ENCODE measurements at regions of chr20 and their contacts with region 1.

Region 1: GRCh38 chr20:23050847-23051631 is 1.6 kb upstream of the THBD start:
- DNase-seq: peak; percentile 94
- H3K4me3 ChIP-seq: peak overlapping the region; percentile 15 to 62 (median 50)
- H3K27ac ChIP-seq: peak overlapping the region; percentile 62
- H3K4me1 ChIP-seq: peaks cover 16% of the 10 kb centered on the region
- H3K27me3 ChIP-seq: no peaks in the 10 kb centered on the region
- CTCF ChIP-seq: peak; percentile 82 to 85
- POLR2A ChIP-seq: peak; percentile 44

Region 2: GRCh38 chr20:22846863-22847262 is 204.2 kb before region 1 on chr20:
- CTCF ChIA-PET with region 1: interaction called, 18 read pairs
- POLR2A ChIA-PET with region 1: no interaction called
- dilution Hi-C with region 1: no loop called
- intact Hi-C with region 1: loop called (anchors 1 kb)
- DNase-seq: no peak
- H3K4me3 ChIP-seq: no peak overlapping the region
- H3K27ac ChIP-seq: no peak overlapping the region
- H3K4me1 ChIP-seq: peaks cover 4% of the 10 kb centered on the region
- H3K27me3 ChIP-seq: peaks cover 1 to 5% of the 10 kb centered on the region in 2 experiments
- CTCF ChIP-seq: no peak
- POLR2A ChIP-seq: no peak

Region 3: GRCh38 chr20:23029326-23029725 is 21.7 kb before region 1 on chr20:
- CTCF ChIA-PET with region 1: no interaction called
- POLR2A ChIA-PET with region 1: no interaction called
- dilution Hi-C with region 1: no loop called
- intact Hi-C with region 1: no loop called
- DNase-seq: no peak
- H3K4me3 ChIP-seq: no peak overlapping the region
- H3K27ac ChIP-seq: no peak overlapping the region
- H3K4me1 ChIP-seq: no peaks in the 10 kb centered on the region
- H3K27me3 ChIP-seq: peaks cover 10 to 11% of the 10 kb centered on the region in 2 experiments
- CTCF ChIP-seq: no peak
- POLR2A ChIP-seq: no peak

Region 4: GRCh38 chr20:23106261-23106851 is 55.3 kb after region 1 on chr20:
- CTCF ChIA-PET with region 1: interaction called, 35 read pairs
- POLR2A ChIA-PET with region 1: interaction called, 4 read pairs
- dilution Hi-C with region 1: no loop called
- intact Hi-C with region 1: loop called (anchors 1 kb)
- DNase-seq: peak; percentile 93
- H3K4me3 ChIP-seq: no peak overlapping the region
- H3K27ac ChIP-seq: peak overlapping the region; percentile 70
- H3K4me1 ChIP-seq: peaks cover 52% of the 10 kb centered on the region
- H3K27me3 ChIP-seq: no peaks in the 10 kb centered on the region
- CTCF ChIP-seq: peak; percentile 27 to 39
- POLR2A ChIP-seq: peak; percentile 17

Region 5: GRCh38 chr20:23187751-23188150 is 136.7 kb after region 1 on chr20:
- CTCF ChIA-PET with region 1: interaction called, 13 read pairs
- POLR2A ChIA-PET with region 1: no interaction called
- dilution Hi-C with region 1: no loop called
- intact Hi-C with region 1: no loop called
- DNase-seq: no peak
- H3K4me3 ChIP-seq: no peak overlapping the region
- H3K27ac ChIP-seq: no peak overlapping the region
- H3K4me1 ChIP-seq: no peaks in the 10 kb centered on the region
- H3K27me3 ChIP-seq: no peaks in the 10 kb centered on the region
- CTCF ChIP-seq: no peak
- POLR2A ChIP-seq: no peak

Region 6: GRCh38 chr20:23257848-23258746 is 207.1 kb after region 1 on chr20:
- CTCF ChIA-PET with region 1: interaction called, 21 read pairs
- POLR2A ChIA-PET with region 1: interaction called, 4 read pairs
- dilution Hi-C with region 1: no loop called
- intact Hi-C with region 1: loop called (anchors 1 kb)
- DNase-seq: peak; percentile 97
- H3K4me3 ChIP-seq: no peak overlapping the region
- H3K27ac ChIP-seq: peak overlapping the region; percentile 98
- H3K4me1 ChIP-seq: peaks cover 39% of the 10 kb centered on the region
- H3K27me3 ChIP-seq: no peaks in the 10 kb centered on the region
- CTCF ChIP-seq: no peak
- POLR2A ChIP-seq: peak; percentile 25

Region 7: DNA sequence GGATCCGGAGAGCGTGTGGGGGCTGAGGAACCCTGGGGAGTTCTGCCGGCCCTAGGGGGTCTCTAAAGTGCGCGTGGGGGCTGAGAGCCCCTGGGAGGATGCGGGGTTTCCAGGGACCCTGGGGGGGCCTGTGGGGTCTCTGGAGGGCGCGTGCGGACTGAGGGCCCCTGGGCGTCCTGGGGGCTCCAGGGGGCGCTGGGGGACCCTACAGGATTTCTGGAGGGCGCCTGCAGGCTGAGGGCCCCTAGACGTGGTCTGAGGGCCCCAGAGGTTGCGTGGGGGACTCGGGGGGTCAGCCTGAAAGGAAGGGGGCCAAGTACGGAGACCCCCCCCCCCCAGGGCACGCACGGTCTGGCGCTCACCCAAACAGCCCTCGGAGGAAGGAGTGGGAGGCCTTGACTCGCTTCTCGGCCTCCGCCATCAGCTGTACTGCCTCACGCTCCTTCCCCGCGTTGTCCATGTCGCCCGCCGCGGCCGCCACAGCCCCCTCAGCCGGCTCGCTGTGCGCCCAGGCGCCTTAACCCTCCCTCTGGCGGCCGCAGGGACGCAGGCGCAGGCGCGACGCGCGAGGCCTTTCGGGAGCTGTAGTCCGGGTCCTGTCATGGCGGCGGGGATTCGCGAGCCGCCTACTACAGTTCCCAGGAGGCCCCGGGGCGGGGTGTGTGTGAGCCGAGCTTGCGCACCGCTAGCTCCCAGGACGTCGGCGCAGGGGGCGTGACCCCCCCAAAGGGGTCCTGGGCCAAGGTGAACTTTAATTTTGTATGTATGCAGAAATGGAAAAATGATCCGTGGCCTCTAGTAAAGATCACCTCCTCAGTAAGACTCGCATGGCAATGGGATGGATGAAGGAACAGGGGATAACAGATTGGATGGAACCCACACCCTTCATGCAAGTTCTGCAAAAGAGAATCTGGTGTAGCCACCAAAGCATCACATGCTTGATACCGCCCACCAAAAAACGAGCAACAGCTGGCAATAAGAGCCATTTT is 370.2 kb after region 1 on chr20 and contains the start of gene NAPB:
- CTCF ChIA-PET with region 1: interaction called, 3 read pairs
- POLR2A ChIA-PET with region 1: no interaction called
- dilution Hi-C with region 1: no loop called
- intact Hi-C with region 1: loop called (anchors 5 kb)
- DNase-seq: peak; percentile 93
- H3K4me3 ChIP-seq: peak within 1 kb of the TSS; percentile 86 to 90 (median 88)
- H3K27ac ChIP-seq: peak within 1 kb of the TSS; percentile 22
- H3K4me1 ChIP-seq: peaks cover 8% of the 10 kb centered on the region
- H3K27me3 ChIP-seq: peaks cover 4 to 7% of the 10 kb centered on the region in 2 experiments
- CTCF ChIP-seq: peak; percentile 14 to 51
- POLR2A ChIP-seq: peak; percentile 91
- total RNA-seq, gene NAPB: 8.1 and 10.1 TPM in 2 replicates